ENCODE measurements at regions of chr4 and their contacts with region 1.

Region 1: GRCh38 chr4:74133786-74134499 is 24.0 kb upstream of the MTHFD2L start:
- DNase-seq: peak; percentile 56 to 89 (median 61)
- ATAC-seq: peak; percentile 99
- H3K4me3 ChIP-seq: no peak overlapping the region
- H3K27ac ChIP-seq: no peak overlapping the region
- H3K4me1 ChIP-seq: peaks cover 0 to 7% of the 10 kb centered on the region in 2 experiments; a peak in 2 of 5 replicates
- H3K27me3 ChIP-seq: no peaks in the 10 kb centered on the region
- CTCF ChIP-seq: peak; percentile 80 to 93 (median 85)
- EP300 ChIP-seq: no peak
- POLR2A ChIP-seq: no peak
- RAD21 ChIP-seq: peak; percentile 92 to 93

Region 2: GRCh38 chr4:73341454-73341853 is 792.5 kb before region 1 on chr4:
- CTCF ChIA-PET with region 1: interaction called, 3 read pairs
- POLR2A ChIA-PET with region 1: no interaction called
- in situ Hi-C with region 1: no loop called
- intact Hi-C with region 1: loop called (anchors 2 kb)
- DNase-seq: peak; percentile 12 to 67 (median 20)
- ATAC-seq: peak; percentile 93
- H3K4me3 ChIP-seq: no peak overlapping the region
- H3K27ac ChIP-seq: no peak overlapping the region
- H3K4me1 ChIP-seq: peaks cover 0 to 2% of the 10 kb centered on the region in 2 experiments; a peak in 1 of 5 replicates
- H3K27me3 ChIP-seq: no peaks in the 10 kb centered on the region
- CTCF ChIP-seq: peak; percentile 65 to 84 (median 83)
- EP300 ChIP-seq: no peak
- POLR2A ChIP-seq: no peak
- RAD21 ChIP-seq: peak; percentile 88 to 91

Region 3: DNA sequence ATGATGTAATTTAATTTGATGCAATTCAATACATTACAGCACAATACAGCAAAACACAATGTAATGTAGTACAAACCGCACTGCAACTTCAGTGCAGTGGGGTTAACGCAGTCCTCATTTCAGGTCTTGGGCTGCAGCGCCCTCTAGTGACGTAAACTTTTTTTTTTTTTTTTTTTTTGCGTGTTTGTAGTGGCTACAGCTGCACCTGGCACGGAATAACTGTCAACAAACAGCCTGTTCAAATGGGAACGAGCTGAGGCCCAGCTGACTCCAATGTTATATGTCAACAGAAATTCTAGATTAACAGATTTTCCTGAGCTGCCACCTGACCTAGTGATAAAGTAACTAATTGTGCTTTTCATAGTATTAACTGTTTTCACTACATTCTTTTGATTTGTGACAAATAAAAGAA is 480.2 kb before region 1 on chr4:
- CTCF ChIA-PET with region 1: no interaction called
- POLR2A ChIA-PET with region 1: interaction called, 3 read pairs
- in situ Hi-C with region 1: loop called (anchors 5 kb)
- intact Hi-C with region 1: no loop called
- DNase-seq: peak; percentile 44 to 71 (median 62)
- ATAC-seq: peak; percentile 73
- H3K4me3 ChIP-seq: no peak overlapping the region
- H3K27ac ChIP-seq: no peak overlapping the region
- H3K4me1 ChIP-seq: no peaks in the 10 kb centered on the region
- H3K27me3 ChIP-seq: no peaks in the 10 kb centered on the region; a peak in 1 of 5 replicates
- CTCF ChIP-seq: peak; percentile 43 to 80 (median 68); a peak in 5 of 6 replicates
- EP300 ChIP-seq: no peak
- POLR2A ChIP-seq: no peak
- RAD21 ChIP-seq: peak; percentile 53 to 66

Region 4: GRCh38 chr4:73729534-73730165 is 404.3 kb before region 1 on chr4:
- CTCF ChIA-PET with region 1: interaction called, 9 read pairs
- POLR2A ChIA-PET with region 1: no interaction called
- in situ Hi-C with region 1: no loop called
- intact Hi-C with region 1: loop called (anchors 5 kb)
- DNase-seq: peak; percentile 50 to 74 (median 62)
- ATAC-seq: peak; percentile 95
- H3K4me3 ChIP-seq: no peak overlapping the region
- H3K27ac ChIP-seq: no peak overlapping the region
- H3K4me1 ChIP-seq: peaks cover 0 to 25% of the 10 kb centered on the region in 2 experiments; a peak in 4 of 5 replicates
- H3K27me3 ChIP-seq: no peaks in the 10 kb centered on the region
- CTCF ChIP-seq: peak; percentile 70 to 85 (median 80)
- EP300 ChIP-seq: no peak
- POLR2A ChIP-seq: no peak
- RAD21 ChIP-seq: peak; percentile 72 to 79

Region 5: GRCh38 chr4:73922766-73923630 is 210.9 kb before region 1 on chr4:
- CTCF ChIA-PET with region 1: no interaction called
- POLR2A ChIA-PET with region 1: interaction called, 3 read pairs
- in situ Hi-C with region 1: no loop called
- intact Hi-C with region 1: loop called (anchors 5 kb)
- DNase-seq: peak in 1 of 4 experiments; percentile 36
- ATAC-seq: no peak
- H3K4me3 ChIP-seq: no peak overlapping the region
- H3K27ac ChIP-seq: no peak overlapping the region
- H3K4me1 ChIP-seq: no peaks in the 10 kb centered on the region; a peak in 1 of 5 replicates
- H3K27me3 ChIP-seq: no peaks in the 10 kb centered on the region
- CTCF ChIP-seq: peak in 1 of 3 experiments; percentile 58; a peak in 3 of 6 replicates
- EP300 ChIP-seq: no peak
- POLR2A ChIP-seq: no peak
- RAD21 ChIP-seq: peak; percentile 61 to 76

Region 6: DNA sequence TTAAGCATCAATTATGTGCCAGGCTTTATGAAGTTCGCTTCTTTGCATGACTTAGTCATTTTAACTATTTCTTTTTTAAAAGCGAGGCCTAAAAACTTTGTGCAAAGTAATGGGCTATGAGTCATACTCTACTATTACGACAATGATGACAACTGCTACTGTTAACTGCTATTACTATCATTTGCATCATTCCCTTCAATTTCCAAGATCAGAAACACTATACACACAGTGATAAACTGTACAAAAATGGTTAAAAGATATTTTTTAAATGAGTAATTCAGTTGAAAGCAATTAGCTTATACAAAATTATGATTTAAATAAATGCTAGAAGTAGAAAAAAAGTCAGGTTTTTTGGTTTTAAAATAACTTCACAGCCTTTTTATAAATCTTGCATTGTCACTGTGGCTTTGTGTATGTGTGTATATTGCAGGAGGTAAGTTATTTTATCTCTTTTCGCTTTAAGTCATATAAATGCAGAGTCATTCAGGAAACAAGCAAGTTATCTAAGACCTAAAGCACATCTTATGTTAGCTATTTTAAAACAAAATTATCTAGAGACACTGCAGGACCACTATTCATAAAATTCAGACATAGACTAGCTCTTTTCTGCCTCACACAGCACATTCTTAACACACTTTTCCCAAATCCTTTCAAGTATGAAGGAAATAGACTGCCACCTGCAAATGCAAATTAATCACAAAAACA is 76.9 kb before region 1 on chr4:
- CTCF ChIA-PET with region 1: no interaction called
- POLR2A ChIA-PET with region 1: no interaction called
- in situ Hi-C with region 1: no loop called
- intact Hi-C with region 1: loop called (anchors 5 kb)
- DNase-seq: peak; percentile 42 to 73 (median 59)
- ATAC-seq: peak; percentile 78
- H3K4me3 ChIP-seq: no peak overlapping the region
- H3K27ac ChIP-seq: peak overlapping the region; percentile 98
- H3K4me1 ChIP-seq: peaks cover 15 to 47% of the 10 kb centered on the region in 2 experiments
- H3K27me3 ChIP-seq: no peaks in the 10 kb centered on the region
- CTCF ChIP-seq: no peak
- EP300 ChIP-seq: peak; percentile 86
- POLR2A ChIP-seq: no peak
- RAD21 ChIP-seq: no peak